MCF 10A (cell line): ENCODE measurements at regions of chr2 and their contacts with region 1.

Region 1: DNA sequence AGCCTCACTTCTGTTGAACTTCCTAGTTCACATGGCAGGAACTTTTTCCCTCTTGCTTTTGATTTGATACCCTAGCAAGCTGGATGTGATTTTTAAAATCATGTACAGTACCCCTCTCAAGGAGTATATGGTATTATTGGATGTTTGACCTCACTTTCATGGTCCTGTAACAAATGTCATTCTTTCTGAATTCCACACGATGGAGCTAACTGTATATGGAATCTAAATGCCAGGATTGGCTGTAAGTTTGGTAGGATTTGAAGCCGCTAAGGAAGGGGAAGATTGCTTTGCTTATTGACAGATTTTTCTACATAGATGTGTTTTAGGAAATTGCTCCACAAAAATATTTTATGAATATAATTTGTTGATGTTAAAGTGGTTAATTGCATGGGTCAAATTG is 18.3 kb downstream of the MAIP1 start:
- DNase-seq: peak; percentile 33
- H3K4me3 Mint-ChIP-seq: no peak overlapping the region
- H3K27ac Mint-ChIP-seq: no peak overlapping the region
- H3K4me1 Mint-ChIP-seq: peaks cover 25% of the 10 kb centered on the region
- H3K27me3 Mint-ChIP-seq: no peaks in the 10 kb centered on the region
- CTCF ChIP-seq: peak; percentile 56

Region 2: GRCh38 chr2:199962203-199962602 is 11.5 kb before region 1 on chr2:
- CTCF ChIA-PET with region 1: interaction called, 13 read pairs
- POLR2A ChIA-PET with region 1: interaction called, 3 read pairs
- intact Hi-C with region 1: no loop called
- DNase-seq: no peak
- H3K4me3 Mint-ChIP-seq: no peak overlapping the region
- H3K27ac Mint-ChIP-seq: peak overlapping the region; percentile 53
- H3K4me1 Mint-ChIP-seq: peaks cover 5% of the 10 kb centered on the region
- H3K27me3 Mint-ChIP-seq: no peaks in the 10 kb centered on the region
- CTCF ChIP-seq: no peak

Region 3: GRCh38 chr2:200050921-200051610 is 77.4 kb after region 1 on chr2:
- CTCF ChIA-PET with region 1: no interaction called
- POLR2A ChIA-PET with region 1: no interaction called
- intact Hi-C with region 1: no loop called
- DNase-seq: no peak
- H3K4me3 Mint-ChIP-seq: no peak overlapping the region
- H3K27ac Mint-ChIP-seq: no peak overlapping the region
- H3K4me1 Mint-ChIP-seq: no peaks in the 10 kb centered on the region
- H3K27me3 Mint-ChIP-seq: no peaks in the 10 kb centered on the region
- CTCF ChIP-seq: no peak

Region 4: DNA sequence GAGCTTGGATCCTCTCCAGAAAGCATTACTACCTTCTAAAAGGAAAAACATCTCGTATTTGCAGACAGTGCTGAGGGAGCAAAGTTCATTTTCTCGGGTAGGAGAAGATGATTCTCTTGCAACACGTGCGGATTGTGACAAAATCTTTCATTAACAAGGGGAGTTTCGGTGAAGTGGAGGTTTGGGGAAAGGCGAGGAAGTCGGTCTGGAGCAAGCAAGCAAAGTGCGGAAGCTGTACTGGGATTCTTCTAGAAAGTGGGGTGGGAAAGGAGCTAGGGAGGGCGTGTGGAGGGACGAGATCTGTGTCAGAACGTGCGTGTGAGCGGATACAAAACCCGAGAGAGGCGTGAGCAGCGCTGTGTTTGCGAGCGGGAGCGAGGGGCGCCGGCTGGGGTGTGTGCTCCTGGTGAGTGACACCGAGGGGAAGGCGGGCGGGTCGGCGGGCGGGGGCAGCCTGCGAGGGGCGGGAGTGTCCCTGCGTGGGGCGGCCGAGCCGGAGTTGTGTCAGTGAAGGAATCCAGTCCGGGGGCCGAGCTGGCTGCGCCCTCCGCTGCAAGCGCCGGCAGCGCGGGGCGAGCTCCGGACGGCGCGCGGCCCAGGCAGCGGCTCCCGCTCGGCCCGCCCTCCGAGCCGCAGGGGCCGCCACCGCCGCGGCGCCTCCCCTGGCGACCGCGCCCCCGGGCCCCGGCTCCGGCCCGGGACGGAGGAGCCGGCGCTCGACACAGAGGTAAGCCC is 332.7 kb after region 1 on chr2 and contains the start of gene SPATS2L:
- CTCF ChIA-PET with region 1: interaction called, 12 read pairs
- POLR2A ChIA-PET with region 1: interaction called, 14 read pairs
- intact Hi-C with region 1: no loop called
- DNase-seq: peak; percentile 63
- H3K4me3 Mint-ChIP-seq: peak within 1 kb of the TSS; percentile 99
- H3K27ac Mint-ChIP-seq: peak within 1 kb of the TSS; percentile 94
- H3K4me1 Mint-ChIP-seq: peaks cover 45% of the 10 kb centered on the region
- H3K27me3 Mint-ChIP-seq: no peaks in the 10 kb centered on the region
- CTCF ChIP-seq: no peak
- total RNA-seq, gene SPATS2L: 67.5 and 68.3 TPM in 2 replicates

Region 5: DNA sequence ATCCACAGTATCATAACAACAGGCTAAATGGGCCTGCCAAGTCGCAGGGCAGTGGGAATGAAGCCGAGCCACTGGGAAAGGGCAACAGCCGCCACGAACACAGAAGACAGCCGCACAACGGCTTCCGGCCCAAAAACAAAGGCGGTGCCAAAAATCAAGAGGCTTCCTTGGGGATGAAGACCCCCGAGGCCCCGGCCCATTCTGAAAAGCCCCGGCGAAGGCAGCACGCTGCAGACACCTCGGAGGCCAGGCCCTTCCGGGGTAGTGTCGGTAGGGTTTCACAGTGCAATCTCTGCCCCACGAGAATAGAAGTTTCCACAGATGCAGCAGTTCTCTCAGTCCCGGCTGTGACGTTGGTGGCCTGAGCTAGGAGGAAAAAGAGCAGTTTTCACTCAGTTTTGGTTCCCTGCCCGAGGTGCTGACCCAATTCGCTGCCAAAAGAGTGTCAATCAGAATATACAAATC is 504.0 kb after region 1 on chr2:
- CTCF ChIA-PET with region 1: interaction called, 239 read pairs
- POLR2A ChIA-PET with region 1: interaction called, 4 read pairs
- intact Hi-C with region 1: loop called (anchors 1 kb)
- DNase-seq: no peak
- H3K4me3 Mint-ChIP-seq: no peak overlapping the region
- H3K27ac Mint-ChIP-seq: no peak overlapping the region
- H3K4me1 Mint-ChIP-seq: peaks cover 12% of the 10 kb centered on the region
- H3K27me3 Mint-ChIP-seq: no peaks in the 10 kb centered on the region
- CTCF ChIP-seq: no peak

Region 6: GRCh38 chr2:200578778-200579177 is 605.1 kb after region 1 on chr2:
- CTCF ChIA-PET with region 1: interaction called, 3 read pairs
- POLR2A ChIA-PET with region 1: no interaction called
- intact Hi-C with region 1: loop called (anchors 2 kb)
- DNase-seq: peak; percentile 49
- H3K4me3 Mint-ChIP-seq: no peak overlapping the region
- H3K27ac Mint-ChIP-seq: peak overlapping the region; percentile 49
- H3K4me1 Mint-ChIP-seq: no peaks in the 10 kb centered on the region
- H3K27me3 Mint-ChIP-seq: no peaks in the 10 kb centered on the region
- CTCF ChIP-seq: peak; percentile 32